CD4-positive, alpha-beta T cell (primary cell): ENCODE measurements at regions of chr14 and their contacts with region 1.

Region 1: DNA sequence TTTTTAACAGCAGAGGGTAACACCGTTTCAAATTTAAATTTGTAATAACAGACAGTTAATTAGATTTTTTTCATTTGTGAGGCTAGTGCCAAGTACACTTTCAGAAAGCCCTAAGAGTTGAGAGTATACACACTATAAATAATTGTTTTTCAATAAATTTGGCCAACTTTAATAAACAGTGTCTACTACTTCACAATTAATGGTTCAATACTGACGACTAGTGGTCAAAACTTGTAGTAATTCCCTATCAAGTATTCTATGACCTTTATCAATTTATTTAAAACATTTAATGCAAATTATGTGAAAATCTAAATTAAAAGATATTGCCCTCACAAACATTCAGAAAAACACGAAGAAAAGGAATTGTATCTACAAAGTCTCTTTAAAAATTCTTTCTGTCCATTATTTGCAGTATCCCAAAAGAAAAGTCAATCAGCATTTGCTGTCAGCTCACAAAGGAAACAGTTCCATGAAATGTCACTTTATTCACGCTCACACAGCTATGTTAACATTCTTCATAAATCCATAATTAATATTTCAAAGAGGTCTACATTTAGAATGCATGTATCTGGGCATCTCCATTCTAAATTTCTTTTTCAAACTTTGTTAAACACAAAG is 91.2 kb downstream of the CEP128 start:
- DNase-seq: peak in 3 of 14 experiments; percentile 33 to 40 (median 34)
- ATAC-seq: no peak
- H3K4me3 ChIP-seq: no peak overlapping the region
- H3K4me3 Mint-ChIP-seq: no peak overlapping the region
- H3K27ac ChIP-seq: no peak overlapping the region
- H3K27ac Mint-ChIP-seq: no peak overlapping the region
- H3K4me1 ChIP-seq: no peaks in the 10 kb centered on the region
- H3K4me1 Mint-ChIP-seq: no peaks in the 10 kb centered on the region
- H3K27me3 ChIP-seq: no peaks in the 10 kb centered on the region
- H3K27me3 Mint-ChIP-seq: no peaks in the 10 kb centered on the region
- CTCF ChIP-seq: peak; percentile 60

Region 2: GRCh38 chr14:78959674-78960264 is 1890.5 kb before region 1 on chr14:
- CTCF ChIA-PET with region 1: no interaction called
- POLR2A ChIA-PET with region 1: no interaction called
- intact Hi-C with region 1: loop called in 1 of 2 experiments (anchors 5 kb)
- DNase-seq: peak; percentile 3 to 55 (median 18)
- ATAC-seq: no peak
- H3K4me3 ChIP-seq: no peak overlapping the region
- H3K4me3 Mint-ChIP-seq: no peak overlapping the region
- H3K27ac ChIP-seq: no peak overlapping the region
- H3K27ac Mint-ChIP-seq: no peak overlapping the region
- H3K4me1 ChIP-seq: no peaks in the 10 kb centered on the region
- H3K4me1 Mint-ChIP-seq: no peaks in the 10 kb centered on the region
- H3K27me3 ChIP-seq: no peaks in the 10 kb centered on the region
- H3K27me3 Mint-ChIP-seq: peaks cover 20% of the 10 kb centered on the region
- CTCF ChIP-seq: peak; percentile 92

Region 3: DNA sequence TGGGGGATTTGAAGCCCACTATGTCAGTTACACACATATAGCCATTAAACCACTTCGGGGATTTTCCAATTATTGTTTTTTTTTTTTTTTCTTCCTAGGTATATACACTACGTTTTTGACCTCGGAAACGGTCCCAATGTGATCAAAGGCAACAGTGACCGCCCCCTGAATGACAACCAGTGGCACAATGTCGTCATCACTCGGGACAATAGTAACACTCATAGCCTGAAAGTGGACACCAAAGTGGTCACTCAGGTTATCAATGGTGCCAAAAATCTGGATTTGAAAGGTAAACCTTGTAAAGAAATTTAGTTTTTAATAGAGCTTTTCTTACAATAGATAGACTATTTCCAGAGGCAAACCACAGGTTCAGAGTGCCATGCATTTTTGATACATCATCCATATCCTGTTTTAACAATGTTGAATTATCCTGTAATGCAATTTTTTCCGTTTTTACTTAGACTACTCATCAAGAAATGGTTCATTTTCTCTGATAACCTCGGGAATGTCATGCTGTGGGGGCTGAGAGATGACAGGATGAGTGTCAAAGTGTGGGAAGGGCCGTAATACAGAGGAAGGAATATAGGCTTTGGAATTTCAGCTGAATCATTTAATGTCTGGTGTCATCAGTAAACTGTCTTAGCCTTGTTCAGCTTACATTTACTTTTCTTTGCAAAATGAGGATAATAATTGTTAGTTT is 1883.0 kb before region 1 on chr14:
- CTCF ChIA-PET with region 1: no interaction called
- POLR2A ChIA-PET with region 1: no interaction called
- intact Hi-C with region 1: loop called in 1 of 2 experiments (anchors 5 kb)
- DNase-seq: no peak
- ATAC-seq: no peak
- H3K4me3 ChIP-seq: no peak overlapping the region
- H3K4me3 Mint-ChIP-seq: no peak overlapping the region
- H3K27ac ChIP-seq: no peak overlapping the region
- H3K27ac Mint-ChIP-seq: no peak overlapping the region
- H3K4me1 ChIP-seq: no peaks in the 10 kb centered on the region
- H3K4me1 Mint-ChIP-seq: no peaks in the 10 kb centered on the region
- H3K27me3 ChIP-seq: peaks cover 0 to 4% of the 10 kb centered on the region in 2 experiments
- H3K27me3 Mint-ChIP-seq: peaks cover 32% of the 10 kb centered on the region
- CTCF ChIP-seq: no peak

Region 4: DNA sequence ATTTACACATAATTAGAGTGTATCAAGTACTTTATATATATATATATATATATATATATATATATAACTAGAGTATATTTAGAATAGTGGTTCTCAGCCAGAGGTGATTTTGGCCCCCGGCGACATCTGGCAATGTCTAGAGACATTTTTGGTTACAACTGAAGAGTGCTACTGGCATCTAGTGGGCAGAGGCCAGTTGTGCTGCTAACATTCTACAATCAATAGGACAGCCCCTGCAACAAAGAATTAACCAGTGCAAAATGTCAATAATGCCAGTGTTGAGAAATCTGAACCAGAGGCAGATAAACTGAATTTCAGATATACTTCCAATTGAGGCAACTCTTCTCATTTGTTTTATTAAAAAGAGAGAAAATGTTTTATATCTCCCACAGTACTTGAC is 361.5 kb after region 1 on chr14:
- CTCF ChIA-PET with region 1: no interaction called
- POLR2A ChIA-PET with region 1: no interaction called
- intact Hi-C with region 1: no loop called
- DNase-seq: peak in 8 of 14 experiments; percentile 15 to 69 (median 27)
- ATAC-seq: peak; percentile 80
- H3K4me3 ChIP-seq: no peak overlapping the region
- H3K4me3 Mint-ChIP-seq: no peak overlapping the region
- H3K27ac ChIP-seq: no peak overlapping the region
- H3K27ac Mint-ChIP-seq: no peak overlapping the region
- H3K4me1 ChIP-seq: peaks cover 9% of the 10 kb centered on the region
- H3K4me1 Mint-ChIP-seq: peaks cover 63% of the 10 kb centered on the region
- H3K27me3 ChIP-seq: no peaks in the 10 kb centered on the region
- H3K27me3 Mint-ChIP-seq: no peaks in the 10 kb centered on the region
- CTCF ChIP-seq: peak; percentile 46

Region 5: GRCh38 chr14:81613341-81614045 is 763.2 kb after region 1 on chr14:
- CTCF ChIA-PET with region 1: no interaction called
- POLR2A ChIA-PET with region 1: no interaction called
- intact Hi-C with region 1: no loop called
- DNase-seq: no peak
- ATAC-seq: no peak
- H3K4me3 ChIP-seq: no peak overlapping the region
- H3K4me3 Mint-ChIP-seq: no peak overlapping the region
- H3K27ac ChIP-seq: no peak overlapping the region
- H3K27ac Mint-ChIP-seq: no peak overlapping the region
- H3K4me1 ChIP-seq: no peaks in the 10 kb centered on the region
- H3K4me1 Mint-ChIP-seq: no peaks in the 10 kb centered on the region
- H3K27me3 ChIP-seq: no peaks in the 10 kb centered on the region
- H3K27me3 Mint-ChIP-seq: peaks cover 18% of the 10 kb centered on the region
- CTCF ChIP-seq: no peak